Heart right ventricle (tissue), 16 donors: ENCODE measurements at regions of chr7 and their contacts with region 1.

Region 1: GRCh38 chr7:137296576-137296975 is 47.0 kb downstream of the PTN start:
- DNase-seq: no peak
- ATAC-seq: no peak
- H3K4me3 ChIP-seq: no peak overlapping the region
- H3K27ac ChIP-seq: no peak overlapping the region
- H3K4me1 ChIP-seq: peaks cover 0 to 9% (median 0%) of the 10 kb centered on the region in 9 donors
- H3K27me3 ChIP-seq: no peaks in the 10 kb centered on the region
- CTCF ChIP-seq: no peak

Region 2: GRCh38 chr7:137282043-137282442 is 14.5 kb before region 1 on chr7:
- intact Hi-C with region 1: loop called in 1 of 10 experiments (anchors 2 kb)
- DNase-seq: no peak
- ATAC-seq: no peak
- H3K4me3 ChIP-seq: no peak overlapping the region
- H3K27ac ChIP-seq: no peak overlapping the region
- H3K4me1 ChIP-seq: no peaks in the 10 kb centered on the region
- H3K27me3 ChIP-seq: no peaks in the 10 kb centered on the region
- CTCF ChIP-seq: no peak

Region 3: GRCh38 chr7:137316648-137317353 is 20.2 kb after region 1 on chr7:
- intact Hi-C with region 1: no loop called
- DNase-seq: no peak
- ATAC-seq: no peak
- H3K4me3 ChIP-seq: no peak overlapping the region
- H3K27ac ChIP-seq: no peak overlapping the region
- H3K4me1 ChIP-seq: no peaks in the 10 kb centered on the region
- H3K27me3 ChIP-seq: no peaks in the 10 kb centered on the region
- CTCF ChIP-seq: no peak